ENCODE measurements at regions of chr6 and their contacts with region 1.

Region 1: DNA sequence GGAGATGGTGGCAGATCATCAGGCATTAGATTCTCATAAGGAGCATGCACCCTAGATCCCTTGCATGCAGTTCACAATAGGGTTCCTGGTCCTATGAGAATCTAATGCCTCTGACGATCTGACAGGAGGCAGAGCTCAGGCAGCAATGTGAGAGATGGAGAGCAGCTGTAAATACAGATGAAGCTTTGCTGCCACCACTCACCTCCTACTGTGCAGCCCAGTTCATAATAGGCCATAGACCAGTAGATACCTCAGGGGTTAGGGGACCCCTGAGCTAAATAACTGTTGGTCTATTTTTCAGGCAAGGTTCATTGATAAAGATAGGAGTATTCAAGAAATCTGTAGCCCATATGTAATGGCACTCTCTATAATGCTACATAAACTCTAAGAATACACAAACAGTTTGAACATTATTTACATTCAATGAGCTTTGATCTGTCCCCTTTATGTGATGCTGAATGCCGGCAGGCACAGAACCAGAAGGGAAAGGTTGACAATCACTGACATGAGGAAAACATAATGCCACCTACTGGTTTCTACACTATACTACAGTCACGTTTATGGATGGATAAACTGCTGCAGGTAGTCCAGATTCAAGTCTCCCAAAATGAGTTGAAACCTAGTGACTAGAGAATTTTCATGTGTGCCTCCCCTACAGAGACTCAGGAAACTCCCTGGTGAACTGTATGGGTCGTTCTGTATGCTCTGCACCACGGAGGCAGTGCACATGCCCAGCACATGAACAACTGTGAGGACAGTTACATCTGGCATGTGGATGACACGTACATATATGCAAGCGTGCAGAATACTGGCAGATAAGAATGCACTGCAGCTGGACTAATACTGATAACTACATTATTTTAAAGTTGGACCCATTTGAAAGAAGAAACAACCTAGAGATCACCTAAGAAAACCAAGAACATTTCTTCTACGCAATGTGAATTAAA is 72.0 kb downstream of the DST start:
- DNase-seq: peak in 2 of 42 donors; percentile 10 to 29

Region 2: DNA sequence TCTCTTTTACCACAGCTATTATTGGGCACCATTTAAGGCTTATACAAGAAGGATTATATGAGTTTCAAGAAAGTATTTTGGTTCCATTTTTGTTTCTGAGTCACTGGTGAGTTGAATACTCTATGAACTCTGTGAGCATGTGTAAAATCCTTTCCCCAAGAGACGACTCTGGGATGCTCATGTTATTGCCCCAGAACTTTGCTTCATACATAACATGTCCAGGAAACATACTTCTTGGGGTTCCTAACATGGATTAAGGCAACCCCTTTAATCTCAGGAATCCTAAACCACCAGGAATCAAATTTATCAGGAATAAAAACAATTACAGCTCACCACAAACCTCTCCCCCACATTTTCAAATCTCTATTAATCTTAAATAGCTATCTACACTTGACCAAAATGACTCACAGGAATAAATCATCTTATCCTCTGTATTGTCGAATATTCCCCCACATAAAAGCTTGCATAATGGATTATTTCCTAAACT is 205.8 kb before region 1 on chr6:
- intact Hi-C with region 1: loop called (anchors 10 kb)
- DNase-seq: no peak